ENCODE measurements at regions of chr13 and their contacts with region 1.

Region 1: GRCh38 chr13:94674609-94675348 is 37.6 kb downstream of the SOX21 start:
- ATAC-seq: peak in 6 of 8 experiments; percentile 39 to 79 (median 46)
- H3K4me3 ChIP-seq: no peak overlapping the region
- H3K27ac ChIP-seq: no peak overlapping the region
- H3K4me1 ChIP-seq: peaks cover 4 to 8% of the 10 kb centered on the region in 2 donors

Region 2: DNA sequence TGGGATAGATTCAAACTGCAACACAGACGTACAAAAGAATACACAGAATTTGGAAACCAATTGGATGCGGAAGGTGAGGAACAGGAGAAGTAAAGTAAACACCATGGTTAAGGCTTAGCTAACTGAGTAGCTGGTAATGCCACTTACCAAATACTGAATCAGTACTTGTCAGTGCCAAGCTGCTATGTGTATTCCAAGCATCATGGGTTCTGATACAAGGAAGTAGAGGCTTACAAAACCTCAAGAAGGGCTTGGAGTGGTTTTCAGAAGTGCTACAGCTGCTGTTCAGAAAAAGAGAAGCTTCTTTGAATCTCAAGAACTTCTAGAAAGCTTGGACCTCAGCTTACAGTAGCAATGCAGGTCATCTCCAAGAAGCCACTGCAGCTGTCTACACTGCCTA is 159.4 kb before region 1 on chr13:
- in situ Hi-C with region 1: no loop called
- ATAC-seq: no peak
- H3K4me3 ChIP-seq: no peak overlapping the region
- H3K27ac ChIP-seq: no peak overlapping the region
- H3K4me1 ChIP-seq: no peaks in the 10 kb centered on the region

Region 3: GRCh38 chr13:94764576-94765321 is 90.0 kb after region 1 on chr13:
- in situ Hi-C with region 1: loop called in 1 of 9 experiments (anchors 25 kb)
- ATAC-seq: peak in 1 of 8 experiments; percentile 71
- H3K4me3 ChIP-seq: no peak overlapping the region
- H3K27ac ChIP-seq: no peak overlapping the region
- H3K4me1 ChIP-seq: no peaks in the 10 kb centered on the region

Region 4: DNA sequence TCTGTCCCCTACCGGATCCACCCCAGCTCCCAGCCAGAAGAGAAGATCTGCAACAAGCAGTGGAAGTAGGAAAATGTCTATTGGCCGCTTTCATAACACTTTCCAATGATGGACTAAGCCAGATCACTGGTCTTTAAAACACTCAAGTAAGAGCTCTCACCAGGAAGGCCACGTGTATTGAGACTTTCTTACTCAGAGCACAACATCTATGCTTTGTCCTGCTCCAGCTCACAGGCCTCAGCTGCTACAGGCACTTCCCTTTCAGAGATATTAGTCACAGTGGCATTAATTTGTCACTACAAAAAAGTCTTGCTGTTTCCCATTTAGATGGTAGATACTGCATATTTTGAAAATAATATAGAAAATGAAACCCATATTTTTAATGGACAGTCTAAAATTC is 462.3 kb after region 1 on chr13:
- in situ Hi-C with region 1: loop called in 1 of 9 experiments (anchors 25 kb)
- ATAC-seq: peak in 2 of 8 experiments; percentile 16 to 45
- H3K4me3 ChIP-seq: no peak overlapping the region
- H3K27ac ChIP-seq: no peak overlapping the region
- H3K4me1 ChIP-seq: no peaks in the 10 kb centered on the region

Region 5: DNA sequence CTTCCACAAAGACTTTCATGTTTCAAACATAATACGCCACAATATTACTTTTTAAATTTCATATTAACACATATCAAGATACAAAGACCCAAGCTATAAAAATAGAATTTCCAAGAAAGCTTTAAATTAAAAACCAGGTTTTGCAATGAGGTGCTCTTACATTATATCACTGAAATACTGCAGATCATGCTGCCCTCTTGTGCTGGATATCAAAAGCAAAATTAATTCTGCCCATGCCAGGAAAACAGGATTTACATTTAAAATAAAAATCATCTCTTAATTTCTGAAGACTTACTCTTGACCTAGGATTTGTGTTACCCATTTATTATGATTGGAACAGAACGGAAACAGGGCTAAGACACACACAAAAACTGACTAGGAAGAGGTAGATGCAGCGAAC is 481.4 kb after region 1 on chr13:
- in situ Hi-C with region 1: loop called in 1 of 9 experiments (anchors 25 kb)
- ATAC-seq: no peak
- H3K4me3 ChIP-seq: no peak overlapping the region
- H3K27ac ChIP-seq: no peak overlapping the region
- H3K4me1 ChIP-seq: peaks cover 13 to 23% of the 10 kb centered on the region in 2 donors

Measured in motor neuron (in vitro differentiated cells).